ENCODE measurements at regions of chr5 and their contacts with region 1.

Region 1: DNA sequence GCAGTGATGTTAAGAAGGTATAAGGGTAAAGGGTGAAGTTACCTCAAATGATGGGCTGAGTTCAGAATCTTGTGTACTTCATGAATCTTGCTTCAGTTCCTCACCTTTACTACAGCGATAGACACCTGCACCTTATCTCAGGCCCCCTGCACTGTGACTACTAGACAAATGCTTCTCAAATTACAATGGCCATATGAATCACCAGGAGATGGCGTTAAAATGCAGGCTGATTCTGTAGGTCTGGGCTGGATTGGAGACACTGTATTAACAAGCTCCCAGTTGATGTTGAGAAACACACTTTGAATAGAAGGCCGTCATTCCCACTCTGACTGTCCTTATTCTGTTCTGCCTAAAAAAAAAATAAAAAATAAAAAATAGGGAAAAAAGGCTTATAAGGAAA is 29.8 kb downstream of the TARS1 start:
- DNase-seq: peak; percentile 67
- H3K4me3 ChIP-seq: no peak overlapping the region
- CTCF ChIP-seq: peak; percentile 74

Region 2: GRCh38 chr5:33936004-33936380 is 465.4 kb after region 1 on chr5:
- in situ Hi-C with region 1: loop called (anchors 25 kb)
- DNase-seq: peak; percentile 28
- H3K4me3 ChIP-seq: peak overlapping the region; percentile 47
- CTCF ChIP-seq: no peak

Measured in astrocyte of the cerebellum (primary cell).